K562 (cell line): ENCODE measurements at regions of chr17 and their contacts with region 1.

Region 1: DNA sequence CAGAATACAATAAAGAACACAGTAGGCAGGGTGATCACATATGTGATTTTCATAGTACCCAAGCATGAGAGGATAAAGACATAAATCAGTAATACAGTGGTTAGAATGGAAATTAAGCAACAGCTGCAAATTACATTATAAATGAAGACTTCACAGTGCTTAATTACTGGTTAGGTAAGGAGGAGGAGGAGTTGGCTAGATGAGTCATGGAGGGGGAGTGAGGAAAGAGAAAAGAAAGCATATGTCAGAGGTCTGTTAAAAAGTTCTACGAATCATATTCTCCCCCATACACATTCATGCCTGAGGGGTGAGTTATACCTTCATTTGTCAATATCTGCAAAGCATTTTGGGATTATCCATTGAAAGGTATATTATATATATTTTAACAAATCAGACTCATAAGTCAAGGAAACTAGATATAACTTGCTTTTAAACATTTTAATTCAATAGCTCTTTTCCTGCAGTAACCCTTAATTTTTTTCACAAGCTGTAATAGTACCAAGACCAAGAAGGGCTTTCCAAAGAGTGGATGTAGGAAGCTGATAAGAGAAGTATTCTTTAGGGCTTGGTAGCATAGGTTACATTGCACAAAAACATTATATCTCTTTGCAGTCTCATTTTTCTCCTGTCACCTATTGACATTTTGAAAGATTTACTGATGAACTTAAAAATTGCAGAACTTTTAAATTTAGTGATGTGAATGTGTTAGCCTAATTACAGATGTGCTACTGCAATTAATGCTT is 99.3 kb downstream of the STXBP4 start:
- DNase-seq: peak; percentile 22 to 70 (median 44)
- ATAC-seq: peak; percentile 87
- H3K4me3 ChIP-seq: no peak overlapping the region
- H3K27ac ChIP-seq: peak overlapping the region; percentile 63; the same call in 2 of the 3 replicates
- H3K4me1 ChIP-seq: peaks cover 6 to 39% of the 10 kb centered on the region in 2 experiments; a peak in 4 of 5 replicates
- H3K27me3 ChIP-seq: no peaks in the 10 kb centered on the region
- CTCF ChIP-seq: no peak
- EP300 ChIP-seq: peak; percentile 40; the same call in 1 of the 2 replicates
- POLR2A ChIP-seq: no peak
- RAD21 ChIP-seq: no peak

Region 2: DNA sequence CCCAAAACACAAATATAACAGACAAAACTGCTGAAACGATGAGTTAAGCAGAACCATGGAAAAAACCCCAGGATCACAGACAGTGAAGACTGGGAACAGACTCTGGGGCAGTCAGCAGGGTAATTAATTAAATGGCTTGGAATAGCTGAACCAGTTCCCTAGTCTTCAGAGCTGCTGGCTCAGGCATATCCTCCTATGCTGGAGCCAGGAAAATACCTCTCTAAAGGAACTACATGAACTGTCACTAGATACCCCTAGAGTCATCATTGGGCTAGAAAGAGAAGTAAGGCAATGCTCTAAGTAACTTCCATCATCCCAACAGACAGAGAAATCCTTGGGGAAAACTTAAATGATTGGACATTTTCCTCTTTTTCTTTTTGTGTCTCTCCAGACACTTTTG is 13.7 kb after region 1 on chr17:
- CTCF ChIA-PET with region 1: no interaction called
- POLR2A ChIA-PET with region 1: no interaction called
- in situ Hi-C with region 1: no loop called
- intact Hi-C with region 1: no loop called
- DNase-seq: no peak
- ATAC-seq: no peak
- H3K4me3 ChIP-seq: no peak overlapping the region
- H3K27ac ChIP-seq: no peak overlapping the region
- H3K4me1 ChIP-seq: peaks cover 0 to 2% of the 10 kb centered on the region in 2 experiments; a peak in 2 of 5 replicates
- H3K27me3 ChIP-seq: no peaks in the 10 kb centered on the region
- CTCF ChIP-seq: no peak
- EP300 ChIP-seq: no peak
- POLR2A ChIP-seq: no peak
- RAD21 ChIP-seq: no peak

Region 3: DNA sequence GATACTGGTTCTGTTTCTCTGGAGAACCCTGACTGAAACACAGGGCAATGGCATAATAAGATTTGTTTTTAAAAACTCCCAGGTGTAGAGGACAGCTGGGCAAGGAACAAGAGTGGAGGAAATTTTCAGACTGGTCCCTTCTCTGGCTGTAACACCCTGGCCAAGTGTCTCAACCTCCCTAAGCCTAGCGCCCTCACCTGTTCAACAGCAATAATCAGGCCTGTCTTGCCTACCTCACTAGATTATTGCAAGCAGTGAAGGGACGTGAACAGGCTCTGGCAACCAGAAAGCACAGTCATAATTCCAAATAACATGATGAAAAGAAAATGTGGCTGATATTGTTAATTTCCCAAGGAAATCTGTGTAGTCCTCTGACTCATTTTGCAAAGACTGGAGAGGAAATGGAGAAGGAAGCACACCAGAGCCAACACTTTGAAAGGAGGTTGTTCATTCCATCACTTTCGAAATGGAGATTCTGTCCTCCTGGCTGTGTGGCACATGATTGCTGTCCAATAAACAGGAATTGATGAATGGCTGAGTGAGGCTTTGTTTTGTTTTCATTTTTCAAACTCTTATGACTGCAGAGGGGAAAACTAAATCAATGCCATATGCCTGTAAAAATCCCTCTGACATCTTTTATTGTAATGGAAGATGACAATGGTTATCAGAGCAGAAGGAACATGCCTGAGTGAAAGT is 109.4 kb after region 1 on chr17:
- CTCF ChIA-PET with region 1: no interaction called
- POLR2A ChIA-PET with region 1: no interaction called
- in situ Hi-C with region 1: no loop called
- intact Hi-C with region 1: loop called (anchors 10 kb)
- DNase-seq: peak in 1 of 4 experiments; percentile 28
- ATAC-seq: peak; percentile 77
- H3K4me3 ChIP-seq: no peak overlapping the region
- H3K27ac ChIP-seq: no peak overlapping the region
- H3K4me1 ChIP-seq: no peaks in the 10 kb centered on the region
- H3K27me3 ChIP-seq: no peaks in the 10 kb centered on the region
- CTCF ChIP-seq: peak; percentile 33 to 51 (median 41); a peak in 4 of 6 replicates
- EP300 ChIP-seq: no peak
- POLR2A ChIP-seq: no peak
- RAD21 ChIP-seq: peak in 1 of 2 experiments; percentile 46; a peak in 2 of 4 replicates